Naive thymus-derived CD4-positive, alpha-beta T cell (primary cell): ENCODE measurements at regions of chr7 and their contacts with region 1.

Region 1: DNA sequence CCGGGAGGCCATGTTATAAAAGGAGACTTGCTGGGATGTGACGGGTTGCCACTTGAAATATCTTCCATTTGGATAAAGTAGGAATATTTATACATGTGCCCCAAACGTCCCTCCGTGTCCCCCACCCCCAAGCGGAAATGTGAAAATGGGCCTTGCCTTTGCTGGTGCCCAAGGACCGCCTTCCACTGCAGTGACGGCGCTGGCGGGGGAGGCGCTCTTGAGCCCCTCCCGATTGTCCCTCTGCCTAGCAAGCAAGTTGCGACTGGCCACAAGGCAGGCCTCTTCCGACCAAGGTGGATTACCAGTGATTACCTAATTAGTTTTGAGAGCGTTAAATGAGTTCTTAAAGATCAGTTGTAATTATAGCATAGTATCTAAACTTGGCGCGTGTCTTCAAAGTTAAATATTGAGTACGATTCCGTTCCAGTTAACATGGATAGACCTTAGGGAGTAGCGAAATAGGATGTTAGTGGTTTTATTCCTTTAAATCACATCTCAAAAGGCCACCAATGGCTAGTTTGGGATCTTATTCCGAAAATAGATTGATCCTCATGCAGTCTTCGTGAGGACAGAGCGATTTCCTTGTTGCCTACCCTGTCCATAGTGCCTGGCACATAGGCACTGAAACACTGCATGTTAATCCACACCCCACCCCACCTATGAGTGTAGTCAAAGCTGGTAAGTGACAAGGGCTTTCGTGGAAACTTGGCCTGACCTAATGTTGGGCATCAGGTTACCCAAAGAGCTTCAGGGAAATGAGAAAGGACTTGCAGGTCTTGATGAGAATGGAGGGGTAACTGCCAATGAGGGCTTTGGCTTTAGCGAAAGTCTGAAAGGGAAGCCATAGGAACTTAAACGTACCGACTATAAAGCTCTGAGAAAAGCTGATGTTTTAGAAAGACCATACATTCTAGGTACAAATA is 1.1 kb downstream of the PPIA start:
- DNase-seq: peak; percentile 65 to 86 (median 80)
- ATAC-seq: peak; percentile 67
- H3K4me3 ChIP-seq: peak overlapping the region; percentile 87
- H3K4me3 Mint-ChIP-seq: peak overlapping the region; percentile 87 to 99 (median 98)
- H3K27ac ChIP-seq: peak overlapping the region; percentile 98
- H3K27ac Mint-ChIP-seq: peak overlapping the region; percentile 90 to 99 (median 97)
- H3K4me1 ChIP-seq: peaks cover 12 to 21% of the 10 kb centered on the region in 2 donors
- H3K4me1 Mint-ChIP-seq: peaks cover 8 to 41% (median 38%) of the 10 kb centered on the region in 7 donors
- H3K27me3 ChIP-seq: no peaks in the 10 kb centered on the region
- H3K27me3 Mint-ChIP-seq: no peaks in the 10 kb centered on the region

Region 2: GRCh38 chr7:43925984-43926797 is 871.4 kb before region 1 on chr7 and contains the start of gene UBE2D4:
- CTCF ChIA-PET with region 1: no interaction called
- POLR2A ChIA-PET with region 1: no interaction called
- intact Hi-C with region 1: loop called in 1 of 2 experiments (anchors 2 kb)
- DNase-seq: peak; percentile 83 to 93 (median 91)
- ATAC-seq: peak; percentile 93
- H3K4me3 ChIP-seq: peak within 1 kb of the TSS; percentile 73
- H3K4me3 Mint-ChIP-seq: peak within 1 kb of the TSS; percentile 90 to 95 (median 93)
- H3K27ac ChIP-seq: peak within 1 kb of the TSS; percentile 94
- H3K27ac Mint-ChIP-seq: peak within 1 kb of the TSS; percentile 92 to 98 (median 96)
- H3K4me1 ChIP-seq: peaks cover 6 to 16% of the 10 kb centered on the region in 2 donors
- H3K4me1 Mint-ChIP-seq: peaks cover 20 to 58% (median 40%) of the 10 kb centered on the region in 7 donors
- H3K27me3 ChIP-seq: no peaks in the 10 kb centered on the region
- H3K27me3 Mint-ChIP-seq: no peaks in the 10 kb centered on the region
- total RNA-seq, gene UBE2D4: 6.3 to 13.9 (median 9.6) TPM

Region 3: DNA sequence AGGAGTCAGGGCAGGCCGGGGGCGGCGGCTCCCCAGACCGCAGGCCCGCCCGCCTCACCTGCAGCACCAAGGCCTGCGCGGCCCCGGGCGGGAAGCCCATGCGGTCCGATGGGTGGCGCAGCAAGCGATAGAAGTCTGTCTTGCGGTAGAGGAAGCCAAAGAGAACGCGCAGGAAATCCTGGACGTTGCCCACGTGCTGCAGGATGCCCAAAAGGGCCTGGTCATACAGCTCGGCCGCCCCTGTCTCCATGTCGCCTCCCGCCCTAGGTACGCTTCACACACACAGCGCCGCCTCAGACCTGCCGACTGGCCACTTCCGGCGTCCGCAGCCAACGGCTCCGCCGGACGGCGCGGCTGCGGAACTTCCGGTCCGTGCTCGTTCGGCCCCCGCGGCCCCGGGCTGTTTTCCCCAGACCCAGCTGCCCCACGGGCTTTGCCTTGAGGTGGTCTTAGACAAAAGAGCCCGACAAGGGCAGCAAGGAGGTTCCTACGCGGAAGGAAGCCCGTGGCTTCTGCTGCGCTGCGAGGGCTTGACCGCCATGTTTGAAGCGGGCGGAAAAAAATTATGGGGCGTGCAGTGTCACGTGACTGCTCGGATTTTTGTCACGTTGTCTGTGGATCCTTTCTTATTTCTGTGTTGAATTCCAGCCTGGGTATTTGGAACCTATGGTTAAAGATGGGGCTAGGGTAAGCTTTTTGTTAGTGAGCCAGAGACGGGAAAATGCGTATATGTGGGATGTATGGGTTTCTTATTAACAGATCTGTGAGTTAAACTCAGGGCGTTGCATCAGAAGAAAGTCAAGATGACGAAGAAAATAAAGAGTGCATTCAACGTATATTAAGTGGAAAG is 307.0 kb before region 1 on chr7 and contains the start of gene NUDCD3:
- CTCF ChIA-PET with region 1: no interaction called
- POLR2A ChIA-PET with region 1: interaction called, 3 read pairs
- intact Hi-C with region 1: loop called (anchors 1 to 2 kb)
- DNase-seq: peak; percentile 63 to 88 (median 84)
- ATAC-seq: peak; percentile 84
- H3K4me3 ChIP-seq: peak within 1 kb of the TSS; percentile 92
- H3K4me3 Mint-ChIP-seq: peak within 1 kb of the TSS; percentile 85 to 96 (median 90)
- H3K27ac ChIP-seq: peak within 1 kb of the TSS; percentile 98
- H3K27ac Mint-ChIP-seq: peak within 1 kb of the TSS; percentile 90 to 97 (median 93)
- H3K4me1 ChIP-seq: peaks cover 28 to 30% of the 10 kb centered on the region in 2 donors
- H3K4me1 Mint-ChIP-seq: peaks cover 36 to 53% (median 48%) of the 10 kb centered on the region in 7 donors
- H3K27me3 ChIP-seq: peaks cover 0 to 3% of the 10 kb centered on the region in 2 donors
- H3K27me3 Mint-ChIP-seq: peaks cover 0 to 11% (median 3%) of the 10 kb centered on the region in 5 donors
- total RNA-seq, gene NUDCD3: 79.4 to 117 (median 91.0) TPM

Region 4: DNA sequence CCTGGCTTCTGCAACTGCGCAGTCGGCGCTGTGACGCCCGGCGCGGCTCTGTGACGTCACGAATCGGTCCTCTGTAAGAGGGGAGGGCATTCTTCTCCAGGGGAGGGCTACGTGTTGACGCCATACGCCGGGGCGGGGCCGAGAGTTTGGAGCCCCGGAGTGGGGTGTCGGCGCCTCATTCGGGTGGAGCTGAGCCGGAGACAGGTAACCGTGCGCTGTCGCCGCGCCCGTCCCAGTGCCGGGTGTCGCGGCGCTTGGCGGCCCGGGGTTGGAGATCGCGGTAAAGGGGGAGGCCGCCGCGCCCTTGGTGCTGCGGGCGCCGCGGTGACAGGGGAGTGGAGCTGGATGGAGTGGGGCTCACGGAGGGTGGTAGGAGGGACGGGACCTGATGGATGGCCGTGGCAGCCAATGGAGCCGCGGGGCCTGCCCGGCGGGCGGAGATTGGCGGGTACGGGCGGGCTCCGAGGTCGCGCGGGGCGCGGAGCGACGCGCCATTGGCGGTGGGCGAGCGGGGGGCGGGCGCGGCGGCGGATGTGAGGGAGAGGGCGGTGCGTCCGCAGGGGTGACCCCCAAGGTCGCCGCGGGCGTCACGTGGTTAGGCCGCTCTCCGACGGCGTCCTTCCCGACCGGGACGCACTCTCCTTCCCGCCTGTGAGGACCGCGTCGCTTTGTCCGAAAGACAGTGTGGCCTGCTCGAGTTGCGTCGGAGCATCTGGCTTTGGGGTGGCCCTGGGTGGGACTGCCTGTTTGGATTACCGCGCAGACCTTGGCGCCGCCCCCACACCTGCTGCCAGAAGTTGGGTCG is 190.9 kb before region 1 on chr7 and contains the start of gene OGDH:
- CTCF ChIA-PET with region 1: no interaction called
- POLR2A ChIA-PET with region 1: interaction called, 14 read pairs
- intact Hi-C with region 1: loop called (anchors 1 kb)
- DNase-seq: peak; percentile 99 to 100 (median 100)
- ATAC-seq: peak; percentile 95
- H3K4me3 ChIP-seq: peak within 1 kb of the TSS; percentile 71
- H3K4me3 Mint-ChIP-seq: peak within 1 kb of the TSS; percentile 81 to 99 (median 98)
- H3K27ac ChIP-seq: peak within 1 kb of the TSS; percentile 93
- H3K27ac Mint-ChIP-seq: peak within 1 kb of the TSS; percentile 93 to 100 (median 98)
- H3K4me1 ChIP-seq: peaks cover 13 to 17% of the 10 kb centered on the region in 2 donors
- H3K4me1 Mint-ChIP-seq: peaks cover 0 to 45% (median 37%) of the 10 kb centered on the region in 7 donors
- H3K27me3 ChIP-seq: no peaks in the 10 kb centered on the region
- H3K27me3 Mint-ChIP-seq: peaks cover 0 to 20% (median 0%) of the 10 kb centered on the region in 5 donors
- total RNA-seq, gene OGDH: 43.1 to 122 (median 66.3) TPM

Region 5: DNA sequence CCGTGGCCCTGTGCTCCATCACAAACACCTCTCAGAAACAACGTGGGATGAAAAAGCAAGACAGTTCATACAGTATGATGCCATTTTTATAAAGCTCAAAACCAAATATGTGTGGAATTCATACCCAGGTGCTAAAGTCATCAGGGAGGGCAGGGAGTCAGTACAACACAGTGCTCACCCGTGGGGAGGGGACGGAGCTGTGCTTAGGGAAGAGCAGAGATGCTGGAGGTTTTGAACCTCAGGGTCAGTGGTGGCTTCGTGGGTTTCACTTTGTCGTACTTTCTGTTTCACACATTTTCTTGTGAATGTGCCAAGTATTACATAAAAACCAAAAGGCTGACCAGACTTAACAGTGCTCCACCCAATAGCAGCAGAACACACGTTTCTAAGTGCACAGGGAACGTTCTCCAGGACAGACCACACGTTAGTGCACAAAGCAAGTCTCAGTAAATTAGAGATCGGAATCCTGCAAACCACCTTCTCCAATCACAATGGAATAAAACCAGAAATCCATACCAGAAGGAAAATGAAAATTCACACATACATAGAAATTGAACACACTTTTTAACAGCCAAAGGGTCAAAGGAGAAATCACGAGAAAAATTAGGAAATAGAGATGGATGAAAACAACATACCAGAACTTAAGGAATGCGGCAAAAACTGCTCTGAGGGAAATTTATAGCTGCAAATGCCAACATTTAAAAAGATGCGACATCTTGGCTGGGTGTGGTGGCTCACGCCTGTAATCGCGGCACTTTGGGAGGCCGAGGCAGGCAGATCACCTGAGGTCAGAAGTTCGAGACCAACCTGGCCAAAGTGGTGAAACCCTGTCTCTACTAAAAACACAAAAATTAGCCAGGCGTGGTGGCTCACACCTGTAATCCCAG is 27.6 kb before region 1 on chr7:
- CTCF ChIA-PET with region 1: interaction called, 5 read pairs
- POLR2A ChIA-PET with region 1: interaction called, 5 read pairs
- intact Hi-C with region 1: loop called in 1 of 2 experiments (anchors 1 kb)
- DNase-seq: no peak
- ATAC-seq: peak; percentile 63
- H3K4me3 ChIP-seq: no peak overlapping the region
- H3K4me3 Mint-ChIP-seq: peak overlapping the region in 6 of 10 donors; percentile 10 to 50 (median 13)
- H3K27ac ChIP-seq: peak overlapping the region; percentile 61
- H3K27ac Mint-ChIP-seq: peak overlapping the region; percentile 61 to 91 (median 83)
- H3K4me1 ChIP-seq: peaks cover 12 to 33% of the 10 kb centered on the region in 2 donors
- H3K4me1 Mint-ChIP-seq: peaks cover 36 to 49% (median 39%) of the 10 kb centered on the region in 7 donors
- H3K27me3 ChIP-seq: no peaks in the 10 kb centered on the region
- H3K27me3 Mint-ChIP-seq: peaks cover 0 to 4% (median 0%) of the 10 kb centered on the region in 5 donors

Region 6: GRCh38 chr7:44858161-44858560 is 60.6 kb after region 1 on chr7:
- CTCF ChIA-PET with region 1: no interaction called
- POLR2A ChIA-PET with region 1: no interaction called
- intact Hi-C with region 1: no loop called
- DNase-seq: no peak
- ATAC-seq: no peak
- H3K4me3 ChIP-seq: no peak overlapping the region
- H3K4me3 Mint-ChIP-seq: no peak overlapping the region
- H3K27ac ChIP-seq: no peak overlapping the region
- H3K27ac Mint-ChIP-seq: peak overlapping the region in 1 of 9 donors; percentile 9
- H3K4me1 ChIP-seq: peaks cover 0 to 4% of the 10 kb centered on the region in 2 donors
- H3K4me1 Mint-ChIP-seq: peaks cover 0 to 21% (median 5%) of the 10 kb centered on the region in 7 donors
- H3K27me3 ChIP-seq: no peaks in the 10 kb centered on the region
- H3K27me3 Mint-ChIP-seq: peaks cover 0 to 6% (median 0%) of the 10 kb centered on the region in 5 donors

Region 7: DNA sequence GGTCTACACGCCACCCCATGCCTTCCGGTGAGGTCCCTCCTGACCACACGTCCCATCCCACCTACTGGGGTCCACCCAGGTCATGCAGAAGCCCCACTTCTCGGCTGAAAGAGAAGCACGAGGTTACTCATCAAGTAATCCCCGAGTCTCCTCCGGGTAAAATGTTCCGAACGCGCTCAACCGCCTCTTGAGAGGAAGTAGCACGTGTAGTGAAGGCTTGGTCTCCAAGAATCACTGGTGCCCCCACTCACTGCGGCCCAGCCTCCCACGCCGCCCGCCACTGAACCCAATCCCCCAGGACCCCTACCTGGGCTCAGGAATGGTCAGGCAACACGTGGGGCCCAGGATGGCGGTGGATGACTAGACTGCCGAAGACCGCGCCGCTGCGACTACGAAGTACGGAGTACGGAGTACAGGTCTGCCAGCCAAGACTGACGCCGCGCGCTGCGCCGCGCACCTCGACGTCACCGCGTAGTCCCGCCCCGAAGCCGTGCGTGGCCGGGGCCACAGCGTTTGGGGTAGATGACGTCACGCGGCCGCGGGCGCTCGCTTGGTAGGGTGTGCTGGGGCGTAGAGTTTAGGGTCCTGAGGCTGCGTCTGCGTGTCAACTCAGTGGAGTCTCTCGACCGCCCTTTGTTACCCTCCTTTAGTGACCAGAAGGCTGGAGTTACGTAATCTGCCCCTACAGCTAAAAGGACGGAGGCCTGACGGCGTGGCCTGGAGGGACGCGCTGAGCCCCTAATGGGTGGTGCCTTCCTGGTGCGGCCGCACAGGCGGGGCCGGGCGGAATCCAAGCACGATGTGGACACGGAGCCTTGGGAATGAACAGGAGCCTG is 188.8 kb after region 1 on chr7:
- CTCF ChIA-PET with region 1: no interaction called
- POLR2A ChIA-PET with region 1: no interaction called
- intact Hi-C with region 1: loop called in 1 of 2 experiments (anchors 1 kb)
- DNase-seq: peak; percentile 93 to 97 (median 96)
- ATAC-seq: peak; percentile 98
- H3K4me3 ChIP-seq: peak overlapping the region; percentile 92
- H3K4me3 Mint-ChIP-seq: peak overlapping the region; percentile 94 to 100 (median 97)
- H3K27ac ChIP-seq: peak overlapping the region; percentile 97
- H3K27ac Mint-ChIP-seq: peak overlapping the region; percentile 97 to 99 (median 98)
- H3K4me1 ChIP-seq: peaks cover 25 to 33% of the 10 kb centered on the region in 2 donors
- H3K4me1 Mint-ChIP-seq: peaks cover 24 to 66% (median 56%) of the 10 kb centered on the region in 7 donors
- H3K27me3 ChIP-seq: no peaks in the 10 kb centered on the region
- H3K27me3 Mint-ChIP-seq: no peaks in the 10 kb centered on the region